ENCODE measurements at regions of chr6 and their contacts with region 1.

Region 1: DNA sequence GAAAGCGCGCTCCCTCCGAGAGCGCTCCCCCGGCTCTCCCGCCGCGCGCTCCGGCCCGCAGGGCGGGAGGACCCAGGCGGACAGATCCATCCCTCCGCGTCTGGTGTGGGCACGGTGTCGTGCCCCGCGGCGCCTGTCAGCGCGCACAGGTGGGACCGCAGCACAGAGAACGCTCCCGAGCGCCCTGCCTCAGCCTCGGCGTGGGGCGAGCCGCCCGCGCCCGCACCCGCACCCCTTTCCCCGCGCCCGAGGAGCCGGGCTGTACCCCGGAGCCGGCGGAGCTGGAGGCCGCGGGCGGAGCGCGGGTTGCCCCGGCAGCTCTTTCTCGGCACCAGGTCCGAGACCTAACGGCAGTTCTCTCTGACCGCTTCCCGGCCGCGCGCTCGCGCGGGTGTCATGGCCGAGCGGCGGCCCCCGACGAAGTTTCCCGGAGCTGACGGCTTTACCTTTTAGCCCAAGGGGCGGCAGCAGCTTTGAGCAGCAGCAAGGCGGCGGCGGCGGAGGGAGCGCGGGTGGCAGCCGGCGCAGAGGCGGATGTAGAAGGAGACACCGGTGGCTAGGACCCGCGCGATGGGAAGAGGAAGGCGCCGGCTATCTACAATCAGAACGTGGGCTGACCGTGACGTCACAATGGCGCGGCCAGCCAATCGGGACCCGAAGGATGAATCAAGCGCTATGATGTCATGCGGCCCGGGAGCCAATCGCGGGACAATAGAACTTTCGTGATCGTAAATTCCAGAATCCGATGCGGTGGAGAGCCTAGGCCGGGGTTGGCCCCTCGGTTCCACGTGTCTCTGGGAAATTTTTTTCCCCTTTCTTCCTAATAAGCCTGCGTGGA is at the start of gene ELOVL5:
- DNase-seq: peak; percentile 92 to 98 (median 94)
- H3K4me3 ChIP-seq: peak within 1 kb of the TSS; percentile 55 to 88
- H3K4me3 Mint-ChIP-seq: peak within 1 kb of the TSS; percentile 94 to 99 (median 98)
- H3K27ac ChIP-seq: peak within 1 kb of the TSS; percentile 96
- H3K27ac Mint-ChIP-seq: peak within 1 kb of the TSS; percentile 97 to 99 (median 98)
- H3K4me1 ChIP-seq: peaks cover 42% of the 10 kb centered on the region
- H3K4me1 Mint-ChIP-seq: peaks cover 40 to 53% (median 46%) of the 10 kb centered on the region in 4 donors
- H3K27me3 ChIP-seq: no peaks in the 10 kb centered on the region
- H3K27me3 Mint-ChIP-seq: no peaks in the 10 kb centered on the region
- total RNA-seq, gene ELOVL5: 108 to 111 TPM

Region 2: DNA sequence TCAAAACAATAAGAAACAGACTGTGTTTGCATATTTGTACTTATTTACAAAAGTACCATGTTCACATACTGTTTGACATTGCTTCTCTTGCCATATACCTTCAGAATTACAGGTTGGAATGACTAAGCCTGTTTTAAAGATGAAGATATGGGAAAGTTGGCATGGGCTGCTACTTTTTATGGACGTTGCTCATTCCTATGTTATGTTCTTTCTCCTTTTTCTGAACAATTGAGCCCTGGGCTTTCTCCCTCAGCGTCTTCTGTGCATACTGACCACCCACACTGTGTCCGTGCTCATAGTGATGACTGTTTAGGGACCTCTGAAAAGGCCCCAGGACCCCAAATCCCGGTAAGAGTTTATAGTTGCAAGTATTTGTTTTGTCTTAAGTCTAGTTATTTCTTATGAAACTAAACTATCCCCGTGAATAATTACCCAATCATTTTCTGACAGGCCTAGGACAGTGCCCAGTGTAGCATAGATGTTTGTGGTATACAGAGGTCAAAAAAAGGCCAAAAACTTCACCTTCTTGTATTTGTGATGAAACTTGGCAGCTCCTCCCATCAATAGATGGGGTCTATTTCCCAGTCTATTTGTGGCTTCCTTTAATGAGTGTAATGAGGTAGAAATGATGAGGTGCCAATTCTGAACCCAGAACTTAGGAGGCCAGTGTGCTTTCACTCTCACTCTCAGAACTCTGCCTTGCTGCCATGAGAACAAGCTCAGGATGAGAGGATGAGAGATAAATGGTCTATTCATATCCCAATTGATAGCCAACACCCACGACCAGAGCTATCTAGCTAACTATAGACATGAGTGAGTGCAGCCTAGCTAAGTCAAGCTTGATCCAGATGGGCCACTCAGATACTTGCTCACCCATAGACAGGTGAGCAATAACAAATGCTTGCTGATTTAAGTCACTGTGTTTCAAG is 394.4 kb before region 1 on chr6:
- CTCF ChIA-PET with region 1: no interaction called
- POLR2A ChIA-PET with region 1: no interaction called
- intact Hi-C with region 1: no loop called
- DNase-seq: no peak
- H3K4me3 ChIP-seq: no peak overlapping the region
- H3K4me3 Mint-ChIP-seq: no peak overlapping the region
- H3K27ac ChIP-seq: no peak overlapping the region
- H3K27ac Mint-ChIP-seq: no peak overlapping the region
- H3K4me1 ChIP-seq: no peaks in the 10 kb centered on the region
- H3K4me1 Mint-ChIP-seq: peaks cover 0 to 3% (median 0%) of the 10 kb centered on the region in 4 donors
- H3K27me3 ChIP-seq: no peaks in the 10 kb centered on the region
- H3K27me3 Mint-ChIP-seq: peaks cover 1 to 2% of the 10 kb centered on the region in 2 donors

Region 3: DNA sequence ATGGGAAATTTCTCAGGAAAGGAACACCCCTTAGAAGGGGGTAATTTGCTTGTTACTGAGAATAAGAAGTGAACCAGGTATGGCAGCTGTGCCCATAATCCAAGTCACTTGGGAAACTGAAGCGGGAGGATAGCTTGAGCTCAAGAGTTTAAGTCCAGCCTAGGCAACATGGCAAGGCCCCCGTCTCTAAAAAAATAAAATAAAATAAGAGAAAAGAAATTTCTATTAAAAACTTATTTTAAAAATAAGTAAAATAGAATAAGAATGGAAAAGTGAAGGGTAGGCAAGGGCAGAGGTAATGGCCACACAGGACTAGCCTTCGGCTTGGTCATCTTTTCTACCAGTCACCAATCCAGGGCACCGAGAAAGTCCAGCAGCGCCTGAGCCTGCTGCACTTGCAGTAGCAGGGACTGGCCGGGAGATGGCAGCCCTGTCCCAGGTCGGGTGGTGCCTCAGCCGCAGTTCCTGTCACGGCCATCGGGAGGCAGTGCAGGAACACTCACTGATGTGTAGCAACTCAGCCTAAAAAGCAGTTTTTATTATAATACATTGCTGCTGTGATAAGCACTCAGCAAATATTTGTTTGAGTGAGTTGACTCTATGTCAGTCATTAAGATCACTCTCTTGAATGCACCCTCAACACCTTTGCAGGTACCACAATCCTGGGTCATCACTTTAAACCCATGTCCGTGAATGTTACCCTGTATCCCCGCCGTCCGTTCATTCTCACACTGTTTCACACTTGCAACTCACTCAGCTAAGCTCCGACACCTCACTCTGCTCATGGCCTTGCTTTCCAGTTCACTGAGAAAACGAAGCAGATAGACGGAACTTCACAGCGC is 176.8 kb before region 1 on chr6:
- CTCF ChIA-PET with region 1: interaction called, 9 read pairs
- POLR2A ChIA-PET with region 1: interaction called, 6 read pairs
- intact Hi-C with region 1: loop called (anchors 1 kb)
- DNase-seq: peak; percentile 83 to 90 (median 85)
- H3K4me3 ChIP-seq: no peak overlapping the region
- H3K4me3 Mint-ChIP-seq: no peak overlapping the region
- H3K27ac ChIP-seq: no peak overlapping the region
- H3K27ac Mint-ChIP-seq: no peak overlapping the region
- H3K4me1 ChIP-seq: no peaks in the 10 kb centered on the region
- H3K4me1 Mint-ChIP-seq: no peaks in the 10 kb centered on the region
- H3K27me3 ChIP-seq: no peaks in the 10 kb centered on the region
- H3K27me3 Mint-ChIP-seq: no peaks in the 10 kb centered on the region

Region 4: DNA sequence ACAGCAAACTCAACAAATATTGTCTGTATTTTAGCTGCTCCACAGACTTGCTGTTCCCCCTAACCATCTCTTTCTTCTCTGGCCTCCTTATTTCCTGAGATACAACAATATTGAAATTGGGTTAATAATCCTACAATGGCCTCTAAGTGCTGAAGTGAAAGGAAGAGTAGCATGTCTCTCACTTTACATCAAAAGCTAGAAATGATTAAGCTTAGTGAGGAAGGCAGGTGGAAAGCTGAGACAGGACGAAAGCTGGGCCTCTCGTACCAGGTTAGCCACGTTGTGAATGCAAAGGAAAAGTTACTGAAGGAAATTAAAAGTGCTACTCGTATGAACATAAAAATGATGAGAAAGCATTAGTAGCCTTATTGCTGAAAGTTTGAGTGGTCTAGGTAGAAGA is 63.7 kb before region 1 on chr6:
- CTCF ChIA-PET with region 1: interaction called, 21 read pairs
- POLR2A ChIA-PET with region 1: interaction called, 80 read pairs
- intact Hi-C with region 1: no loop called
- DNase-seq: no peak
- H3K4me3 ChIP-seq: no peak overlapping the region
- H3K4me3 Mint-ChIP-seq: peak overlapping the region; percentile 22 to 82 (median 53)
- H3K27ac ChIP-seq: no peak overlapping the region
- H3K27ac Mint-ChIP-seq: peak overlapping the region; percentile 38 to 95 (median 76)
- H3K4me1 ChIP-seq: peaks cover 94% of the 10 kb centered on the region
- H3K4me1 Mint-ChIP-seq: peaks cover 61 to 87% (median 75%) of the 10 kb centered on the region in 4 donors
- H3K27me3 ChIP-seq: no peaks in the 10 kb centered on the region
- H3K27me3 Mint-ChIP-seq: no peaks in the 10 kb centered on the region

Region 5: GRCh38 chr6:53300656-53301551 is 47.7 kb before region 1 on chr6:
- CTCF ChIA-PET with region 1: interaction called, 11 read pairs
- POLR2A ChIA-PET with region 1: interaction called, 130 read pairs
- intact Hi-C with region 1: loop called (anchors 1 kb)
- DNase-seq: peak; percentile 40 to 70 (median 52)
- H3K4me3 ChIP-seq: peak overlapping the region in 1 of 2 donors; percentile 28
- H3K4me3 Mint-ChIP-seq: peak overlapping the region; percentile 57 to 85 (median 73)
- H3K27ac ChIP-seq: peak overlapping the region; percentile 47
- H3K27ac Mint-ChIP-seq: peak overlapping the region; percentile 81 to 97 (median 95)
- H3K4me1 ChIP-seq: peaks cover 81% of the 10 kb centered on the region
- H3K4me1 Mint-ChIP-seq: peaks cover 67 to 87% (median 79%) of the 10 kb centered on the region in 4 donors
- H3K27me3 ChIP-seq: no peaks in the 10 kb centered on the region
- H3K27me3 Mint-ChIP-seq: no peaks in the 10 kb centered on the region

Region 6: GRCh38 chr6:53326372-53327016 is 22.1 kb before region 1 on chr6:
- CTCF ChIA-PET with region 1: interaction called, 6 read pairs
- POLR2A ChIA-PET with region 1: interaction called, 32 read pairs
- intact Hi-C with region 1: no loop called
- DNase-seq: no peak
- H3K4me3 ChIP-seq: no peak overlapping the region
- H3K4me3 Mint-ChIP-seq: peak overlapping the region in 3 of 8 donors; percentile 23 to 52 (median 40)
- H3K27ac ChIP-seq: no peak overlapping the region
- H3K27ac Mint-ChIP-seq: peak overlapping the region; percentile 37 to 85 (median 75)
- H3K4me1 ChIP-seq: peaks cover 86% of the 10 kb centered on the region
- H3K4me1 Mint-ChIP-seq: peaks cover 63 to 83% (median 72%) of the 10 kb centered on the region in 4 donors
- H3K27me3 ChIP-seq: no peaks in the 10 kb centered on the region
- H3K27me3 Mint-ChIP-seq: no peaks in the 10 kb centered on the region

Region 7: DNA sequence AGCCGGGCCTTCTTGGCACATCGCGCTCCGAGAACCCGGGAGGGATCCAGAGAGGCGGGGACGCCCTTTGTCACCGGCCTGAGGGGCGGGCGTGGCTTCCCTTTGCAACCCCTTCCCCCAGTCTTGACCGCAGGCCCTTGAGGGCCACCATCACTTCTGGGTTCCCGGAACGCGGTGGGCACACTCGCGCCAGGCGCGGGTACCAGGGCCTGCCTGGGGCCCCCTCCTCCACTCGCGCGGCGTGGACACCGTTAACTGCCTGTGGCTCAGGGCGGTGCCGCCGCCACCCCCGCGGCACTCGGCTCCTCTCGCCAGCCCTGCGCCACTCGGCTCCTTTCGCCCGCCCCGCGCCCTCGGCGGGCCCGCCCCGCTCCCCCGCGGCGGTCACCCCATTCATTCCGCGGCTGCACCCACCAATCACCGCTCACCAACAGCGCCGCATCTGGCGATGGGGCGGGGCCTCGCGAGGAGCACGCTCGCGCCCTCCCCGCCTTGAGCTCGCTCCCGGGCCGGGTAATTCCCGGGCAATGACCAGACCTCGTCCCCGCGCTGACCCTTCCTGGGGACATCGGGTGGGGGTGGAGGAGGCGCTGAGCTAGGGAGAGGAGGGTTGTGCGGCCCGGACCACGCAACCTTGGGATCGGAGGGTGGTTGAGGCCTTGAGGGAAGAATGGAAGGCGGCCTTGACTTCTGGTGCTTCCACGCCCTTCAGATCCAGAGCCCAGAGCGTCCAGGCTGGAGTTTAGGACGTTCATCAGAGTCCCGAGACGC is 10.7 kb after region 1 on chr6:
- CTCF ChIA-PET with region 1: interaction called, 14 read pairs
- POLR2A ChIA-PET with region 1: interaction called, 131 read pairs
- intact Hi-C with region 1: loop called (anchors 1 kb)
- DNase-seq: peak; percentile 85 to 93 (median 92)
- H3K4me3 ChIP-seq: peak overlapping the region; percentile 50 to 74
- H3K4me3 Mint-ChIP-seq: peak overlapping the region; percentile 81 to 96 (median 91)
- H3K27ac ChIP-seq: peak overlapping the region; percentile 99
- H3K27ac Mint-ChIP-seq: peak overlapping the region; percentile 87 to 100 (median 98)
- H3K4me1 ChIP-seq: peaks cover 53% of the 10 kb centered on the region
- H3K4me1 Mint-ChIP-seq: peaks cover 35 to 61% (median 42%) of the 10 kb centered on the region in 4 donors
- H3K27me3 ChIP-seq: no peaks in the 10 kb centered on the region
- H3K27me3 Mint-ChIP-seq: no peaks in the 10 kb centered on the region